A549 (cell line): ENCODE measurements at regions of chr2 and their contacts with region 1.

Region 1: DNA sequence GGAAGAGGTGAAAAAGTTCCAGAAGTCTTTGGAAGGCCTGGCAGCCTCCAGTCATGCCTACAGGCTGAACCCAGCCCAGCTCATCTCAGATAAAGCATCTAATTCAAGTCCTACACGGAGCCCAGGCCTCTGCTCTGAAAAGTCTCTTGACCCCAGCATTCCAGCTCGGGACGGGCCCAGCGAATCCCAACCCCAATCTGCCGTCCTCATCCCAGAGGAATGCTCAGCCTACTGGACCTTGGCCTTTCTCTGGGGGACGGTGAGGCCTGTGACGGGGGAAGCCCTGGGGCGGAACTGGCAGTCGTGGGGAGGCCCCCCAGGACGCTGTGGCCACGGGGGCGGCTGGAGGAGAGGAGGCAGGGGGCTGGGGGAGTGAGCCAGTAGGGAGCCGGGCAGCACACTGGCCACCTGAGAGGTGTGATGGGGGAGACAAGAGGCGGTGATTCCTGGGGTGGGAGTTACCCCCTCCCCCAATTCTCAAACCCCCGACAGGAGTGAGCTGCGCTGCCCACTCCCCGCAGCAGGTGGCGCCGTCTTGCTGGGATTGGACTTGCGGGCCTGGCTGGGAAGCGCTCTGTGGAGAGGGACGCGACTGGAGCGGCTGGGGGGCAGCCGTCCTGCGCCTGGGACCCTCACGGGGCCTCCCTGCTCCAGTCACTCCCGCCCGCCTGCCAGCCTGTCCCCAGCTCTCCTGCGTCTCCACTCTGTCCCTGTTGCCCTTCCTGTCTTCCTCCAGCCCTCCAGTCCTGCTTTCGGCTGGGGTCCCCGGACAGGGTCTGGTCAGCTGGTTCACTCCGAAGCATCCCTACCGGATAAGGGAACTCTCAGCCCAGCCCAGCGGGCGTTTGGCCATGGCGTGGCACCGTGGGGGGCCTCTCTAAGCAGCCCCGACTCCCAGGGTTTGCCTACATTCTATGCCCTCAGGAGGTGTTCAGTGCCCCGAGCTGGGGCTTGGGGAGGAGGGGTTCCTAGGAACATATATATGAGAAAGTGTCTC is 182.6 kb upstream of the HAAO start:
- DNase-seq: peak; percentile 58 to 64
- ATAC-seq: peak; percentile 60 to 86
- H3K4me3 ChIP-seq: peak overlapping the region; percentile 31
- H3K27ac ChIP-seq: peak overlapping the region; percentile 73 to 87
- H3K4me1 ChIP-seq: peaks cover 37% of the 10 kb centered on the region
- CTCF ChIP-seq: peak; percentile 94
- EP300 ChIP-seq: no peak
- POLR2A ChIP-seq: no peak
- RAD21 ChIP-seq: peak; percentile 99

Region 2: DNA sequence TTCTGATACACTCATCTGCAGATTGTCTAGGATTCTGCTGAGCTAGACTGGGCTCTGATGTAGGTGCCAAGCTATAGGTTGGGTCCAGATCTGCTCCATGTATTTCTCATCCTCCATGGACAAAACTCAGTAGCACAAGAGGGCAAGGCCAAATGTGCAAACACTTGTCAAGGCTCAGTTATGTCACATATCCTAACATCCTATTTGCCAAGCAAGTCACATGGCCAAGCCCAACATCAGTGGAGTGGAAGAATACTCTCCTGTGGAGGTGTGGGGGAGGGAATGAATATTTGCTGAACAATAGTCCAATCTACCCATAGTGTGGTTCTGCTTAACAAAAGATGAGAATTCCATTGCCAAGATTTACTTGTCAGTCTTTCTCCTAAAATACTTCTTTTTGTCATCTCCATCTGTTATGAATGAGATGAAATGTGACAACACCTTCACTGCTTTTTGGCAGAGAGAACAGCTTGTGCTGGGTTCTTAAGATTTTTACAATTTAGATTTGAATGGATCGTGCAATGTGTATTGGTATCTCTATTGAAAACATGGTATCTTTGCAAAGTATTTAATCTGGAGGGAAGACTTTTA is 300.9 kb before region 1 on chr2:
- CTCF ChIA-PET with region 1: no interaction called
- POLR2A ChIA-PET with region 1: no interaction called
- DNase-seq: no peak
- ATAC-seq: no peak
- H3K4me3 ChIP-seq: no peak overlapping the region
- H3K27ac ChIP-seq: no peak overlapping the region
- H3K4me1 ChIP-seq: peaks cover 3% of the 10 kb centered on the region; the same call in 1 of the 3 replicates
- CTCF ChIP-seq: no peak
- EP300 ChIP-seq: no peak
- POLR2A ChIP-seq: no peak
- RAD21 ChIP-seq: no peak

Region 3: GRCh38 chr2:42957109-42957860 is 17.7 kb before region 1 on chr2:
- CTCF ChIA-PET with region 1: interaction called, 46 read pairs
- POLR2A ChIA-PET with region 1: no interaction called
- DNase-seq: no peak
- ATAC-seq: peak; percentile 16 to 23; a peak in 2 of 6 replicates
- H3K4me3 ChIP-seq: no peak overlapping the region
- H3K27ac ChIP-seq: 0 out of 6 replicates have a peak overlapping the region, but pooled peaks of 1 of the 2 experiments have one; percentile 20
- H3K4me1 ChIP-seq: no peaks in the 10 kb centered on the region
- CTCF ChIP-seq: no peak
- EP300 ChIP-seq: no peak
- POLR2A ChIP-seq: no peak
- RAD21 ChIP-seq: no peak

Region 4: DNA sequence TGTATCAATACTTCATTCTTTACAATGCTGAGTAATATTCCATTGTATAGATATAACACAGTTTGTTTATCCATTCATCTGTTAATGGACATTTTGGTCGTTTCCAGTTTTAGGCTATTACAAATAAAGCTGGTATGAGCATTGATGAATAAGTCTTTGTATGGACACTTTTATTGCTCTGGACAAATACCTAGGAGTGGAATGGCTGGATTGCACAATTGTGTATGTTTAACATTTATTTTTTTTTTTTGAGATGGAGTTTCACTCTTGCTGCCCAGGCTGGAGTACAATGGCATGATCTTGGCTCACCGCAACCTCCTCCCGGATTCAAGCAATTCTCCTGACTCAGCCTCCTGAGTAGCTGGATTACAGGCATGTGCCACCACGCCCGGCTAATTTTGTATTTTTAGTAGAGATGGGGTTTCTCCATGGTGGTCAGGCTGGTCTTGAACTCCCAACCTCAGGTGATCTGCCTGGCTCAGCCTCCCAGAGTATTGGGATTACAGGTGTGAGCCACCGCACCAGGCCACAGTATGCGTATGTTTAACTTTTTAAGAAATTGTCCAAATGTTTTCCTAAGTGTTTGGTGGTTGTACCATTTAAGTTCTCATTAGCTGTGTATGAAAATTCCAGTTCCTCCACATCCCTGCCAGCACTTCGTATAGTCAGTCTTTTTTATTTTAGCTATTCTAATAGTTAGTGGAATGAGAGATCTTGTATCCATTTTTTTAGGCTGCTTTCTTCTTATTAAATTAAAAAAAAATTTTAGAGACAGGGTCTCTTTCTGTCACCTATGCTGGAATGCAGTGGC is 12.3 kb after region 1 on chr2:
- CTCF ChIA-PET with region 1: interaction called, 42 read pairs
- POLR2A ChIA-PET with region 1: no interaction called
- DNase-seq: peak in 1 of 2 experiments; percentile 47
- ATAC-seq: peak in 1 of 2 experiments; percentile 40; a peak in 3 of 6 replicates
- H3K4me3 ChIP-seq: no peak overlapping the region
- H3K27ac ChIP-seq: peak overlapping the region in 1 of 2 experiments; percentile 42; a peak in 3 of 6 replicates
- H3K4me1 ChIP-seq: peaks cover 15% of the 10 kb centered on the region
- CTCF ChIP-seq: no peak
- EP300 ChIP-seq: peak in 1 of 2 experiments; percentile 32; a peak in 1 of 5 replicates
- POLR2A ChIP-seq: no peak
- RAD21 ChIP-seq: peak in 1 of 2 experiments; percentile 24; a peak in 1 of 5 replicates

Region 5: DNA sequence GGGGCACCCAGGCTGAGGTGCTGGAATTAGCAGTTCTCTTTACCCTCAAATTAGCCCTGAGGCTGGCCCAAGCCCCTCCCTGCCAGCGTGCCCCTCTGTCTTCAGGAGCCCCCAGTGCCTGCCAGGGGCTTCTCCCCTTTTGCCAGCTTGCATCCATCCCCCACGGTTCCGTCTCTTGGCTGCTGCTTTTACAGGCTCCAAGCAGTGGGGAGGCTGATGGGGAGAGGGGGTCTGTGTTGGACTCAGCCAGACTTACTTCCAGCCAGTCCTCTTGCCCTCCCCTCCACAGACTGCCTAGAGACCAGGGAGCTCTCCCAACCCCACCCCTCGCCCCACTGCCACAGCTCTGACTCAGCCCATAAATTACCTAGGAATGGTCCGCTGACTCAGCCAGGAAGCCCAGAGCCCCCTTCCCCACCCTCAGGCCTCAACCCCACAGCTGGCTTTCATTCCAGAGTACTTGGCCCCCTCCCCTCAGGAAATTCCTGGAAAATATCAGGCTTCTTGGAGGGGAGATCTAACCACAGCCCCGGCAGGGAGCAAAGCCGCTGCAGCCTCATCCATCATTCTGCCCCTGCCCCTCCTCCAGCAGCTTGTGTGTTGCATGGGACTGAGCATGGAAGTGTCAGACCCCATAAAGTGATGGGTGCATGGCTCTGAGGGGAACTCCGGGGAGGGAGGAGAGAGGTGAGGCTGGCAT is 66.8 kb after region 1 on chr2:
- CTCF ChIA-PET with region 1: interaction called, 10 read pairs
- POLR2A ChIA-PET with region 1: no interaction called
- DNase-seq: peak; percentile 80 to 84
- ATAC-seq: peak; percentile 77 to 90
- H3K4me3 ChIP-seq: no peak overlapping the region
- H3K27ac ChIP-seq: peak overlapping the region; percentile 80 to 90
- H3K4me1 ChIP-seq: peaks cover 41% of the 10 kb centered on the region
- CTCF ChIP-seq: no peak
- EP300 ChIP-seq: peak in 1 of 2 experiments; percentile 77; a peak in 1 of 5 replicates
- POLR2A ChIP-seq: no peak
- RAD21 ChIP-seq: peak in 1 of 2 experiments; percentile 30; a peak in 2 of 5 replicates

Region 6: GRCh38 chr2:43123981-43124686 is 149.1 kb after region 1 on chr2:
- CTCF ChIA-PET with region 1: interaction called, 22 read pairs
- POLR2A ChIA-PET with region 1: no interaction called
- DNase-seq: no peak
- ATAC-seq: no peak
- H3K4me3 ChIP-seq: no peak overlapping the region
- H3K27ac ChIP-seq: peak overlapping the region in 1 of 2 experiments; percentile 14; a peak in 1 of 6 replicates
- H3K4me1 ChIP-seq: no peaks in the 10 kb centered on the region
- CTCF ChIP-seq: no peak
- EP300 ChIP-seq: no peak
- POLR2A ChIP-seq: no peak
- RAD21 ChIP-seq: no peak

Region 7: GRCh38 chr2:43178602-43179542 is 203.9 kb after region 1 on chr2:
- CTCF ChIA-PET with region 1: interaction called, 20 read pairs
- POLR2A ChIA-PET with region 1: no interaction called
- DNase-seq: peak; percentile 89 to 90
- ATAC-seq: peak; percentile 88 to 91
- H3K4me3 ChIP-seq: no peak overlapping the region
- H3K27ac ChIP-seq: peak overlapping the region; percentile 81 to 93
- H3K4me1 ChIP-seq: peaks cover 64% of the 10 kb centered on the region
- CTCF ChIP-seq: no peak
- EP300 ChIP-seq: no peak
- POLR2A ChIP-seq: no peak; the same call in 1 of the 2 replicates
- RAD21 ChIP-seq: peak; percentile 21 to 49; a peak in 3 of 5 replicates

Region 8: GRCh38 chr2:43542285-43542937 is 567.4 kb after region 1 on chr2:
- CTCF ChIA-PET with region 1: interaction called, 13 read pairs
- POLR2A ChIA-PET with region 1: no interaction called
- DNase-seq: peak; percentile 28 to 55
- ATAC-seq: peak; percentile 56 to 71; a peak in 3 of 6 replicates
- H3K4me3 ChIP-seq: no peak overlapping the region
- H3K27ac ChIP-seq: peak overlapping the region in 1 of 2 experiments; percentile 63; a peak in 1 of 6 replicates
- H3K4me1 ChIP-seq: peaks cover 29% of the 10 kb centered on the region
- CTCF ChIP-seq: peak; percentile 81
- EP300 ChIP-seq: no peak
- POLR2A ChIP-seq: no peak
- RAD21 ChIP-seq: peak; percentile 77 to 86